ENCODE measurements at regions of chr7 and their contacts with region 1.

Region 1: DNA sequence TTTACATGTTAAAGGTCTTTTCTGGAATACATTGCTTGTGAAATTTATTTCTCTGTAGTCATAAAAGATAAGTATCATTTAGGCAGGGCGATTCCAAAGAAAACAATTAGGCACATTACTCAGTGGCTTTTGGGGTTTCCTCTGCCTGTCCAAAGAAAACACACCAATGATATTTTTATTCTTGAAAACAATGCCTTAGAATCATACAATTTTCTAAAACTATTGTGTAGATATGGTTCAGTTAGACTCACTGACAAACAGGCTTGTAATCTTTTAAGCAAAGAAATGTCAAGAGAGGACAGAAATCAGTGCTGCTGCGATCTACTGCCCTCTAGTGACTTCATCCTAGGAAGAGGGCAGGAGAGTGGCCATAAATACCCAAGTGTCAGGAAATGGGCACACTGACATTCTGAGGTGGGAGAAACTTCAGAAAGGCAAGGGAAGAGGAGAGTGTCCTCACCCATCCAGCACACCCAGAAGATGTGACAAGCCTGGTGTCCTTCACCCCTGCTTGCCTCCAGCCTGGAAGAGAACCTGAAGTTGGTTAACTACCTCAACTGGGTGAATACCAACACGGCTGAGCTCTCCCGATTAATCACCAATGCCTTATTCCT is 120.5 kb downstream of the GALNT11 start:
- DNase-seq: peak; percentile 40
- ATAC-seq: peak; percentile 92
- H3K4me3 ChIP-seq: no peak overlapping the region
- H3K27ac ChIP-seq: no peak overlapping the region
- H3K4me1 ChIP-seq: no peaks in the 10 kb centered on the region
- H3K27me3 ChIP-seq: no peaks in the 10 kb centered on the region
- CTCF ChIP-seq: peak; percentile 80
- EP300 ChIP-seq: no peak
- POLR2A ChIP-seq: no peak
- RAD21 ChIP-seq: no peak; the same call in 1 of the 2 replicates

Region 2: DNA sequence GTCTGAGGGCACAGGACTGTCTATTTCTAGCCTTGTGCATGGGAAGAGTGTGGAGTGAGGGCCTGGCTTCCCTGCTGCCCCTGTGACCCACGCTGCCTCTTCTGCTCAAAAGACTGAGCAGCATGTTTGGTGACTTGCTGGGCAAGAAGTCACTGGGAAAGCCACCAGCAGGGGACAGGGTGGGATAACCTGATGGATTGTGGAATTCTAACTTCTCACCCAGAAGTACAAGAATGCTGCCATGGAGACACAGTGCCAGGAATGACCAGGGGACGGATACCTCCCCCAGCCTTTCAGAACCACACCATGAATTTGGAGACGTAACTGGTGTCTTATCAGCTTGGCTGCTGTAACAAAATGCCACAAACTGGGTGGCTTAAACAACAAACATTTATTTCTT is 161.4 kb before region 1 on chr7:
- CTCF ChIA-PET with region 1: interaction called, 3 read pairs
- POLR2A ChIA-PET with region 1: no interaction called
- in situ Hi-C with region 1: no loop called
- intact Hi-C with region 1: loop called (anchors 1 kb)
- DNase-seq: peak; percentile 5
- ATAC-seq: peak; percentile 84
- H3K4me3 ChIP-seq: no peak overlapping the region
- H3K27ac ChIP-seq: no peak overlapping the region
- H3K4me1 ChIP-seq: no peaks in the 10 kb centered on the region
- H3K27me3 ChIP-seq: no peaks in the 10 kb centered on the region
- CTCF ChIP-seq: peak; percentile 67
- EP300 ChIP-seq: no peak
- POLR2A ChIP-seq: no peak
- RAD21 ChIP-seq: no peak

Region 3: DNA sequence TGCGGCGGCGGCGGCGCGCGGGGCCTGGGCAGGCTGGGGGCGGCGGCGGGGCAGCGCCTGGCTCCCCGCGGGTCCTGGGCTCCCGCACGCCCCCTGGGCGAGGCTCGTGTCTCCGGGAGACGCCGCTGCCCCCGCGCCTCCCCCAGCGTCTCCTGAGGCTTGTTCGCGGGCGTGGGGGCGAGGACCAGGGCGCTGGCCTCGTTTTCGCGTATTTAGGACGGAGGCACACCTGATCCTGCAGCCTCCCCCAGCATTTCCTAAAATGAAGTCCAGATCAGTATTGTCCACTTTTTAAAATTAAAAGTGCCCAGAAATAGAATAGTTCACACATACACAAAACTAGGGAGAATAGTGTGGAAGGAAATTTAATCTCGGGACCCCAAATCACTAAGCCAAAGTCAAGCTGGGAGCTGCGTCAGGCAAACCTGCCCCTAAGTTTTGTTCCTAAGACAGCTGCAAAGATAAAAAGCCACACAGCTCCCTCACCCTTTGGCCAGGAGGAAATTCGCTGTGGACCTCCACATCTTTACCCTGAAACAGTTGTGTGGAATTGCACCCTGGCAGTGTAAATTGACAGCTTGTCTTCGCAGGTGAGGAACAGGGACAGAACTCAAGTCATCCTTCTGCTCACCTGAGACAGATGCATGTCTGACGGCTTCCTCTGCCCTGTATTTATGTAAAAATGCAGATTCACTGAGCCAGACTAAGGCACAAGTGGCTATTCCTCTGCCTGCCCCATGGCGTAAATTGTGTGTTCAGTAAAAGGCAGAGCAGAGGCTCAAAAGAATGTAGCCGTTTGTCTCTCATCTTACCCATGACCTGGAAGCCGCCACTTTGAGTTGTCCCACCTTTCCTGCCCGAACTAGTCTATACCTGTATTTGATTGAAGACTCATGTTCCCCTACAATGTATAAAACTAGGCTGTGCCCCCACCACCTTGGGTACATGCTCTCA is 119.7 kb before region 1 on chr7:
- CTCF ChIA-PET with region 1: interaction called, 3 read pairs
- POLR2A ChIA-PET with region 1: no interaction called
- in situ Hi-C with region 1: no loop called
- intact Hi-C with region 1: loop called (anchors 2 kb)
- DNase-seq: no peak
- ATAC-seq: no peak
- H3K4me3 ChIP-seq: peak overlapping the region; percentile 67 to 86 (median 73); a peak in 5 of 6 replicates
- H3K27ac ChIP-seq: no peak overlapping the region
- H3K4me1 ChIP-seq: peaks cover 17% of the 10 kb centered on the region
- H3K27me3 ChIP-seq: peaks cover 0 to 8% of the 10 kb centered on the region in 2 experiments; a peak in 2 of 5 replicates
- CTCF ChIP-seq: no peak
- EP300 ChIP-seq: no peak
- POLR2A ChIP-seq: no peak
- RAD21 ChIP-seq: no peak

Region 4: GRCh38 chr7:152076324-152076866 is 69.6 kb before region 1 on chr7:
- CTCF ChIA-PET with region 1: no interaction called
- POLR2A ChIA-PET with region 1: no interaction called
- in situ Hi-C with region 1: no loop called
- intact Hi-C with region 1: loop called (anchors 1 kb)
- DNase-seq: peak; percentile 18
- ATAC-seq: peak; percentile 72
- H3K4me3 ChIP-seq: no peak overlapping the region
- H3K27ac ChIP-seq: no peak overlapping the region
- H3K4me1 ChIP-seq: peaks cover 46% of the 10 kb centered on the region
- H3K27me3 ChIP-seq: no peaks in the 10 kb centered on the region
- CTCF ChIP-seq: peak; percentile 56
- EP300 ChIP-seq: no peak
- POLR2A ChIP-seq: no peak
- RAD21 ChIP-seq: no peak

Region 5: DNA sequence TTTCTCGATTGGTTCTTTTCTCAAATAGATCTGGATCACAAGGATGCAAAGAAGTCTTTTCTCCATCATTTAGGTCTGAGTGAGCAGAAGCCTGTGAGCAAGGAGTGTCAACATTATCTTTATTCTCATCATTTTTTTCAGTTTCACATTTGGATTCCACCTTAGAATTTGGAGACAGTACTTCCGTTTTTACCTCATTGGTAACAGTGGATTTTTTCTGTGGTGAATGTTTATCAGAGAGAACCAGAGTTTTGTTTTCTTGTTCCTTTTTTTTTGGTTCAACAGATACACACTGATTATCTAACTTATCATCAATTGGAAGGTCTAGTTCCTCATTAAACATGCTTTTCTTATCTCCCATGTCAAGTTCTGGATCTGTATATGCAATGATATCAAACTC is 30.8 kb after region 1 on chr7:
- CTCF ChIA-PET with region 1: no interaction called
- POLR2A ChIA-PET with region 1: no interaction called
- in situ Hi-C with region 1: no loop called
- intact Hi-C with region 1: no loop called
- DNase-seq: no peak
- ATAC-seq: no peak
- H3K4me3 ChIP-seq: no peak overlapping the region
- H3K27ac ChIP-seq: no peak overlapping the region
- H3K4me1 ChIP-seq: no peaks in the 10 kb centered on the region
- H3K27me3 ChIP-seq: no peaks in the 10 kb centered on the region
- CTCF ChIP-seq: no peak
- EP300 ChIP-seq: no peak
- POLR2A ChIP-seq: no peak
- RAD21 ChIP-seq: no peak